Cardiac septum (tissue), 1 donor: ENCODE measurements at regions of chr6 and their contacts with region 1.

Region 1: DNA sequence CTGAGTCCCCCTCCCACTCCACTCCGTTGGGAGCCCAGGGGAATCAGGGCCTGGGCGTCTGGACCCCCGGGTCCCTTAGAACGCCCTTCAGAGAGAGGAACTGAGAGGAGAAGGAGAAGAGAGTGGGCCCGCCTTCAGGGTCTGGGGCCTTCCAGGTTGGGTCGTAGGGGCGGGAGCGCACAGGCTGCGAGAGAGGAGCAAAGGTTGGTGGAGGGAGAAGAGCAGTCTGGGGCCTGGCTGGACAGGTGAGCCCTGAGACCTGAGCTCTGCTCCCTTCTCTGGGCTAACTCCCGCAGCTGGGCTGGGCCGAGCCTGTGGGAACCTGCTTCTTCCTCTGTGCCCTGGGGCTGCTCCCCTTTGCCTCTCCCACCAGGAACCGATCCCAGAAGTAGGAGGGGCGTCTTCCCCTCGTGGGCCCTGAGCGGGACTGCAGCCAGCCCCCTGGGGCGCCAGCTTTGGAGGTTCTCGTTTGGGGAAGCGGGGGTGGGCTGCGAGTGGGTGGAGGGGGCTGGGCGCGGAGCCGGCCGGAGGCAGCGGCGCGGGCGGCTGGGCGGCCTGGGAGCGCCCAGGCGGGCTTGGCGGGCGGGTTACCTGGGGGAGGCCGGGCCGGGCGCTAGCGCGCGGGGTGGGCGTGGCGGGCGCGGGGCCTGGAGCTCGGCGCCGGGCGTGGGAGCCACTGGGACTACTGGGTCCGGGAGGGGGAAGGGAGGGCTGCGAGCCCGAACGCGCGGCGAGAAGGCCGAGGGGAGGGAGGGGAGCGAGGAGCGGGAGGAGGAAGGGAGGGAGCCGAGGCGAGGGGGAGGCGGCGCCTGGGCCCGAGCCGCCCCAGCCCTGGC is at the start of gene DDR1:
- DNase-seq: peak; percentile 88
- total RNA-seq, gene DDR1: 61.4 TPM

Region 2: GRCh38 chr6:30678964-30679726 is 204.8 kb before region 1 on chr6:
- intact Hi-C with region 1: loop called (anchors 5 kb)
- DNase-seq: peak; percentile 96

Region 3: GRCh38 chr6:31163922-31164321 is 280.0 kb after region 1 on chr6:
- intact Hi-C with region 1: no loop called
- DNase-seq: no peak